Right lobe of liver (tissue), 6 donors: ENCODE measurements at regions of chrX and their contacts with region 1.

Region 1: DNA sequence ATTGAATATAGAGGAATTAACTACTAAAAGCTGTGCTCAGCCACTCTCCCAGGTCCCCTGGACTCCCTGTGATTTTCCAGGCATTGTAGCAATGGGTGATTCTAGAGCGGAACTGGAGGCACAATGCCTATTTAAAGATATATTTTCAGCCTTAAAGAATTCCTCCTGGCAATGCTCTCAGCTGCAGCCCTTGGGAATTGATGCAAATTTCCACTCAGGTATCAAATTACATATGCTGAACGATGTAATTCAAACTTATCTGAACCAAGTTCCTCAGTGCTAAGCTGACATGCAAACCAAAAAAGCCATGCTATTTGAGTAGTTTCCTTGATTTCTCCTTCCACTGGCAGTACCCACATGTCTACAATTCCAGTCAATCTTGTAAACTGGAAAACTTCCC is 86.3 kb upstream of the GABRA3 start:
- DNase-seq: no peak
- ATAC-seq: no peak
- H3K4me3 ChIP-seq: no peak overlapping the region
- H3K27ac ChIP-seq: no peak overlapping the region
- H3K4me1 ChIP-seq: no peaks in the 10 kb centered on the region
- H3K27me3 ChIP-seq: no peaks in the 10 kb centered on the region
- CTCF ChIP-seq: no peak
- POLR2A ChIP-seq: no peak

Region 2: GRCh38 chrX:152343306-152343705 is 194.1 kb before region 1 on chrX:
- intact Hi-C with region 1: no loop called
- DNase-seq: no peak
- ATAC-seq: no peak
- H3K4me3 ChIP-seq: no peak overlapping the region
- H3K27ac ChIP-seq: no peak overlapping the region
- H3K4me1 ChIP-seq: no peaks in the 10 kb centered on the region
- H3K27me3 ChIP-seq: no peaks in the 10 kb centered on the region
- CTCF ChIP-seq: no peak
- POLR2A ChIP-seq: no peak

Region 3: GRCh38 chrX:152599138-152599537 is 61.8 kb after region 1 on chrX:
- intact Hi-C with region 1: loop called in 1 of 2 experiments (anchors 10 kb)
- DNase-seq: no peak
- ATAC-seq: no peak
- H3K4me3 ChIP-seq: no peak overlapping the region
- H3K27ac ChIP-seq: no peak overlapping the region
- H3K4me1 ChIP-seq: no peaks in the 10 kb centered on the region
- H3K27me3 ChIP-seq: no peaks in the 10 kb centered on the region
- CTCF ChIP-seq: no peak
- POLR2A ChIP-seq: no peak

Region 4: DNA sequence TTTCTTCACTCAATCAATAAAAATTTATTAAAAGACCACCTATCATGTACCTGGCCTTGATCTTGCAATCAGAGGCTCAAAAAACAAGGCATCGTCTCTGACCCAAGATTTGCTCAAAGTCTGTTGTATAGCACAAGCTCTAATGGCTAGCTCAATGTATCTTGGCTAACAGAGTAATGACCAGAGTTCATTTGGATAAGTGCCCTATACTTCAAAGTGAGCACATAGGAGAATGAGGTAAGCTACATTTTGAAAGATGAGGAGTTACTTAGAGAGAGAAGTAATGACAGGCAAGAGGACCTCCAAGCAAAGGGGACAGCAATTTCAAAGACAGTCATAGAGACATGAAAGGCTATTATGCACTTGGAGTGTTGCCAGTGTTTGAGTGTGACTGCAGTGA is 77.4 kb after region 1 on chrX:
- intact Hi-C with region 1: no loop called
- DNase-seq: no peak
- ATAC-seq: peak in 2 of 4 donors; percentile 63 to 77
- H3K4me3 ChIP-seq: no peak overlapping the region
- H3K27ac ChIP-seq: no peak overlapping the region
- H3K4me1 ChIP-seq: no peaks in the 10 kb centered on the region
- H3K27me3 ChIP-seq: peaks cover 0 to 8% of the 10 kb centered on the region in 2 donors
- CTCF ChIP-seq: no peak
- POLR2A ChIP-seq: no peak